ENCODE measurements at regions of chr16 and their contacts with region 1.

Region 1: DNA sequence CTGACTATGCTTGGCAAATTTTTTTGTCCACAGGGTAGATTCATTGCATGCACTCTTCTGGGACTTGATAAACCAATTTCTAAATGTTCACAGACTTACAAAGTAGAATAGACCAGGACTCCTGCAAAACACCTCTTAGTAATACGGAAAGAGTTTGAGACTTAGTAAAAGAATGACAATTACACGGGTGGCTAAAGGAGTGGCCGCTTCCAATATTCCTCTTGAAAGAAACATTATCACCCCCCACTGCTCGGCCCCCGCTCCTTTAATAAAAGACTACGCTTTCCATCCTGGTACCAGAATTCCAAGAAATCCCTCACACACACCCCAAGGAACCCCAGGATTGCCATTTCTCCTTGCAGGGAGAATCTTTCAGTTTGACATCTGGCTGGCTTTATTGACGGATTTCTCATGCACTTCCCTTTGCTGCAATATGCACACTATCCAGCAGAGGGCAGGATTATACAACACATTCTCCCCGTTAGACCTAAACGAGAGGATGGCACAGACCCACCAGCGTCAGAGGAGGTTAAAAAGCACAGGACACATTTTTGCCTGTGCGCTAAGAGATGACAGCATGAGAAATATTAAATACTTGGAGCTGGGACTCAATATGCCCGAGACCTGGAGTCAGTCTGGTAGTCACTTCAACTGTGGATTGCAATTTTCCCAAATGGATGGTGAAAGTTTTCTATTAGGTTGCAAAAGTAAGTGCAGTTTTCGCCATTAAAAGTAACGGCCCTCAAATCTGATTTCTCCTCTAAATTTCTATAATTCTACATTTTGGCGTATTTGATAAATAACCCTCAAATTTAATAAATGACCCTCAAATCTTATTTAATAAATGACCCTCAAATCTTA is 46.6 kb upstream of the NUDT7 start:
- DNase-seq: peak; percentile 74
- ATAC-seq: peak; percentile 93
- H3K4me3 ChIP-seq: no peak overlapping the region
- H3K27ac ChIP-seq: no peak overlapping the region
- H3K4me1 ChIP-seq: no peaks in the 10 kb centered on the region
- H3K27me3 ChIP-seq: no peaks in the 10 kb centered on the region; a peak in 2 of 5 replicates
- CTCF ChIP-seq: peak; percentile 96
- EP300 ChIP-seq: no peak
- POLR2A ChIP-seq: no peak
- RAD21 ChIP-seq: peak; percentile 96

Region 2: GRCh38 chr16:77238593-77238992 is 437.1 kb before region 1 on chr16:
- CTCF ChIA-PET with region 1: no interaction called
- POLR2A ChIA-PET with region 1: no interaction called
- in situ Hi-C with region 1: no loop called
- intact Hi-C with region 1: no loop called
- DNase-seq: no peak
- ATAC-seq: no peak
- H3K4me3 ChIP-seq: no peak overlapping the region
- H3K27ac ChIP-seq: no peak overlapping the region
- H3K4me1 ChIP-seq: no peaks in the 10 kb centered on the region
- H3K27me3 ChIP-seq: peaks cover 0 to 38% of the 10 kb centered on the region in 2 experiments
- CTCF ChIP-seq: no peak
- EP300 ChIP-seq: no peak
- POLR2A ChIP-seq: no peak
- RAD21 ChIP-seq: no peak

Region 3: DNA sequence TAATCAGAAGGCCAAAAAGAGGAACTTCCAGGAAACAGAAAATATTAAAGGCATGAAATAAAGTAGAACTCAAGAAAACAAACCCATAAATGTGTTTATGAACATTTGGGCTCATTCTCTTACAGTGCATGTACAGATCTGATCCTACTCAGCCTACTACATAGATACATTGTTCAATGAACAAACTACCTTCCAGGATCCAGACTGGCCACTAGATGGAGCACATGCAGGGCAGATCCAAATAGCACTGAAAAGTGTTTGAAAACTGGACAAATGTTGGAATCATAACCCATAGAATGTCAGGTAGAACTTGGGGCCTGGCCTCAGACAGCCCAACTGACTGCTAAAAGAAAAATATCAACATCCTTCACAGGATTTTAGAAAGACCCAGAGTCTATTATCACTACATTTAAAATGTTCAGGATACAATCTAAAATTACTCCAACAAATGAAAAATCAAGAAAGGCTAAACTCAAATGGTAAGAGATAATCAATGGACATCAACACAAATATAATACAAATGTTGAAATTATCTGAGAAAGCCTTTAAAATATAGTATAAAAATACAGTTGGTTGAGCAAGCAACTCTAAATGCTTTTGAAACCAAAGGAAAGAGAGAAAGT is 75.8 kb before region 1 on chr16:
- CTCF ChIA-PET with region 1: no interaction called
- POLR2A ChIA-PET with region 1: no interaction called
- in situ Hi-C with region 1: no loop called
- intact Hi-C with region 1: no loop called
- DNase-seq: peak; percentile 41
- ATAC-seq: peak; percentile 91
- H3K4me3 ChIP-seq: no peak overlapping the region
- H3K27ac ChIP-seq: no peak overlapping the region
- H3K4me1 ChIP-seq: no peaks in the 10 kb centered on the region
- H3K27me3 ChIP-seq: no peaks in the 10 kb centered on the region
- CTCF ChIP-seq: peak; percentile 80
- EP300 ChIP-seq: no peak
- POLR2A ChIP-seq: no peak
- RAD21 ChIP-seq: no peak

Region 4: DNA sequence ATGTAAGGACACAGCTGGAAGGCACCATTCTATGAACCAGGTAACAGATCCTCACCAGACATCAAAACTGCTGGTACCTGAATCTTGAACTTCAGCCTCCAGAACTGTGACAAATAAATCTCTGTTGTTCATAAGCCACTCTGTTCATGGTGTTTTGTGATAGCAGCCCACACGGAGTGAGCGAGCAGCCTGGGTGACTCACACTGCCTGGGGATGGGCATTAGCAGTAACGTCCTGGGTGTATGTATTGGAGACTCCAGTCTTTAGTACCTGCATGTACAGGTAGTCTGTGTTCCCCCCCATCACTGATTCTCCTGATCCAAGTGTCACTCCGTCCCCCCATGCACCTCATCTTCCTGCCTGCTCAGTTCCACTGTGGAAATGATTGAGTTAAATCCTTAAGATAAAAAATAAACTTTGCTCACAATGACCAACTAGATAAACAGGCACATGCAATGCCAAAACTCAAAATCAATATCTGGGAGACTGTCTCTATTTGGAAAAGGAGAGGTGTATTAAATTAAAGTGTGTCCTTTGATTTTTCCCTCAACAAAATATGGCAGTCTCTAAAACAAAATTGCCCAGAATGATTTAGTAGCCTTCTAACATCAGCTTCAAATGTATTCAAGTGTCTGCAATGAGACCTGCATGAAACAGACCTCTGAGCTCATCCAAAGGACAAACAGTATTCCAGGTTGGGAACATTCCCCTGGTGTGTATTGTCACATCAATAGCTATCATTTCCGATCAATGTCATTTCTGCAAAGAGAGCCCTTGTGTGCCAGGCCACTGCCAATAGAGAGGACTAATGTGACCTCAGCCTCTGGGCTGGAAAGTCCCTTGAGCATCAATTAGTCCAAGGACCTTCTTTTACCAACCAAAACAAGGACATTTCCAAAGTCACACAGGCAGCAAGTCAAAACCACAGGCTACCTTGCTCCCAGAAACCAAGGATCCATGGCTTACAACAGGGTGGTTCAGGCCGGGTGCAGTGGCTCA is 100.5 kb after region 1 on chr16:
- CTCF ChIA-PET with region 1: interaction called, 28 read pairs
- POLR2A ChIA-PET with region 1: no interaction called
- in situ Hi-C with region 1: loop called (anchors 5 kb)
- intact Hi-C with region 1: no loop called
- DNase-seq: peak; percentile 39
- ATAC-seq: peak; percentile 87
- H3K4me3 ChIP-seq: no peak overlapping the region
- H3K27ac ChIP-seq: peak overlapping the region; percentile 48
- H3K4me1 ChIP-seq: peaks cover 46% of the 10 kb centered on the region
- H3K27me3 ChIP-seq: no peaks in the 10 kb centered on the region
- CTCF ChIP-seq: no peak
- EP300 ChIP-seq: peak in 1 of 2 experiments; percentile 55; a peak in 1 of 4 replicates
- POLR2A ChIP-seq: no peak
- RAD21 ChIP-seq: no peak

Region 5: GRCh38 chr16:77782694-77783093 is 107.0 kb after region 1 on chr16:
- CTCF ChIA-PET with region 1: interaction called, 28 read pairs
- POLR2A ChIA-PET with region 1: no interaction called
- in situ Hi-C with region 1: loop called (anchors 5 kb)
- intact Hi-C with region 1: loop called (anchors 1 kb)
- DNase-seq: peak; percentile 49
- ATAC-seq: peak; percentile 87
- H3K4me3 ChIP-seq: no peak overlapping the region
- H3K27ac ChIP-seq: no peak overlapping the region
- H3K4me1 ChIP-seq: peaks cover 21% of the 10 kb centered on the region
- H3K27me3 ChIP-seq: peaks cover 0 to 8% of the 10 kb centered on the region in 2 experiments; a peak in 2 of 5 replicates
- CTCF ChIP-seq: peak; percentile 81
- EP300 ChIP-seq: no peak
- POLR2A ChIP-seq: no peak
- RAD21 ChIP-seq: peak; percentile 65

Region 6: DNA sequence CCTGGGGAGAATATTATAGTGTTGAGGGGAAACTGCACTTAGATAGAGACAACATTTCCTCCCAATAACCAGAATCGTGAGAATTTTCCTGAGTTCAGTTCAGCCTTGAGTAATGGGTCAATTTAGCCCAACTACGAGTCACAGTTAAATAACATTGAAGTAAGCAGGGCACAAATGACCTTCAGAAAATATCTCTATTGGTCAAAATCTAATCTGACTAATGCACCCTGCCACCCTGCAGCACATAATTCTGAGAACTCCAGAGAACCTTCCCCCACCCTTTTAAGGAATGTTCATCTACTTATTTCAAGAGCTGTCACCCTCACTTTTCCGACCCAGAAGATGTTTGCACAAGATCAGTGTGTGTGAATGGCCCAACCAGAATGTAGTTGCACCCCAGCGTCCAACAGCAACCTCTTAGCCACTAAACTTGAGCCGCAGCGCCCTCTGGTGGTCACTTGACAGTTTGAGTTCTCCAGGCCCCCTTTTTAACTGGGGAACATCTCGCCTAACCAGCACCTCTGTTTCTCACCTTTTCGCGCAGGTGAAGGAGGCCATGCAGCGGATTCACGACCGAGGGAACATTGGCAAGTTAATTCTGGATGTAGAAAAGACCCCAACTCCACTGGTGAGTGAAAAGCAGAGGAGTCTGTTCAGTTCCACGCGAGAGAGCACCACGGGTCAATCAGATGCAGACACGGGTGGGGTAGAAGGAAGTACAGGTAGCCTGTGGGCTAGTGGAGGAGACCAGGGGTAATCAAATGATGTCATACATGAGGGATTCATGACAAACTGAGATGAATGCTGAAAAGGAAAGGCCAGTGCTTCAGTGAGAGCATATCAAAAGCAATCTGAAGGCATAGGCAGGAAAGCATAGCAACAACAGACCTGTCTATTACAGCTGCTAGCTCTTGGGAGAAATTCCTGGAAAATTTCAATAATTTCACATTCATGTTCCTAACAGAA is 295.9 kb after region 1 on chr16:
- CTCF ChIA-PET with region 1: interaction called, 83 read pairs
- POLR2A ChIA-PET with region 1: no interaction called
- in situ Hi-C with region 1: loop called (anchors 5 kb)
- intact Hi-C with region 1: loop called (anchors 1 kb)
- DNase-seq: peak; percentile 67
- ATAC-seq: peak; percentile 91
- H3K4me3 ChIP-seq: no peak overlapping the region
- H3K27ac ChIP-seq: no peak overlapping the region
- H3K4me1 ChIP-seq: no peaks in the 10 kb centered on the region
- H3K27me3 ChIP-seq: peaks cover 0 to 7% of the 10 kb centered on the region in 2 experiments; a peak in 1 of 5 replicates
- CTCF ChIP-seq: peak; percentile 95
- EP300 ChIP-seq: no peak
- POLR2A ChIP-seq: no peak
- RAD21 ChIP-seq: peak; percentile 87

Region 7: DNA sequence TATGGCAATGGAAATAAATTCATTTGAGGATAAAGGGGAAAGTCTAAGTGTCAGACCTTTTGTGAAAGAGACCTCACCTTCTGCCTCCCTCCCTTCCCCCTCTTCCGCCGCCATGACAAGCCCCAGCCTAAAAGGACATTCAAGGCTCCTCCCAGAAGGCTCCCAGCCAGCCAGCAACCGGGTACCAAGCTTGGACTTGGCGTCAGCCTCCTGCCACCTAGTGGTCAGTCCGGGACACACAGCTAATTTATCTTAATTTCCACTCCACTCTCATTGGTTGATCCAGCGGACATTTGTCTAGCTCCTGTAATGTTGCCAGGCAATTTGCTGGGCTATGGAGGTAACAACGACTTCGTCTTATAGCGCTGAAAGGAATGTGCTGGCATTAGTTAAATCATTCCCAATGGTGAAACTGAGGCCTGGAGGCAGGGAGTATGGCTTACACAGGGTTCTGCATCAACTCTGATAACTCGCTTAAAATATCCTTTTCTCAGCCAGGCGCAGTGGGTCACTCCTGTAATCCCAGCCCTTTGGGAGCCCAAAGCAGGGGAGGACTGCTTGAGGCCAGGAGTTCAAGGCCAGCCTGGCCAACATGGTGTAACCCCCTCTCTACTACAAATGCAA is 327.3 kb after region 1 on chr16:
- CTCF ChIA-PET with region 1: interaction called, 4 read pairs
- POLR2A ChIA-PET with region 1: no interaction called
- in situ Hi-C with region 1: no loop called
- intact Hi-C with region 1: loop called (anchors 1 kb)
- DNase-seq: peak; percentile 76
- ATAC-seq: peak; percentile 82
- H3K4me3 ChIP-seq: no peak overlapping the region
- H3K27ac ChIP-seq: no peak overlapping the region
- H3K4me1 ChIP-seq: peaks cover 22% of the 10 kb centered on the region
- H3K27me3 ChIP-seq: no peaks in the 10 kb centered on the region; a peak in 1 of 5 replicates
- CTCF ChIP-seq: peak; percentile 90
- EP300 ChIP-seq: no peak
- POLR2A ChIP-seq: no peak
- RAD21 ChIP-seq: peak; percentile 82

Region 8: GRCh38 chr16:78094176-78094575 is 418.5 kb after region 1 on chr16:
- CTCF ChIA-PET with region 1: interaction called, 6 read pairs
- POLR2A ChIA-PET with region 1: no interaction called
- in situ Hi-C with region 1: loop called (anchors 5 kb)
- intact Hi-C with region 1: loop called (anchors 5 kb)
- DNase-seq: no peak
- ATAC-seq: no peak
- H3K4me3 ChIP-seq: no peak overlapping the region
- H3K27ac ChIP-seq: no peak overlapping the region
- H3K4me1 ChIP-seq: peaks cover 15% of the 10 kb centered on the region
- H3K27me3 ChIP-seq: peaks cover 0 to 10% of the 10 kb centered on the region in 2 experiments; a peak in 1 of 5 replicates
- CTCF ChIP-seq: peak; percentile 44
- EP300 ChIP-seq: no peak
- POLR2A ChIP-seq: no peak
- RAD21 ChIP-seq: no peak

Region 9: GRCh38 chr16:78099372-78100161 is 423.9 kb after region 1 on chr16 and contains the start of gene WWOX:
- CTCF ChIA-PET with region 1: interaction called, 6 read pairs
- POLR2A ChIA-PET with region 1: no interaction called
- in situ Hi-C with region 1: loop called (anchors 5 kb)
- intact Hi-C with region 1: loop called (anchors 5 kb)
- DNase-seq: peak; percentile 96
- ATAC-seq: peak; percentile 95
- H3K4me3 ChIP-seq: peak within 1 kb of the TSS; percentile 70 to 93 (median 92)
- H3K27ac ChIP-seq: peak within 1 kb of the TSS; percentile 90
- H3K4me1 ChIP-seq: peaks cover 54% of the 10 kb centered on the region
- H3K27me3 ChIP-seq: no peaks in the 10 kb centered on the region; a peak in 1 of 5 replicates
- CTCF ChIP-seq: peak; percentile 87
- EP300 ChIP-seq: no peak; a peak in 2 of 4 replicates
- POLR2A ChIP-seq: peak; percentile 86 to 93
- RAD21 ChIP-seq: peak; percentile 78
- total RNA-seq, gene WWOX: 37.4 and 38.4 TPM in 2 replicates

Measured in HepG2 (cell line).